K562 (cell line): ENCODE measurements at regions of chr1 and their contacts with region 1.

Region 1: DNA sequence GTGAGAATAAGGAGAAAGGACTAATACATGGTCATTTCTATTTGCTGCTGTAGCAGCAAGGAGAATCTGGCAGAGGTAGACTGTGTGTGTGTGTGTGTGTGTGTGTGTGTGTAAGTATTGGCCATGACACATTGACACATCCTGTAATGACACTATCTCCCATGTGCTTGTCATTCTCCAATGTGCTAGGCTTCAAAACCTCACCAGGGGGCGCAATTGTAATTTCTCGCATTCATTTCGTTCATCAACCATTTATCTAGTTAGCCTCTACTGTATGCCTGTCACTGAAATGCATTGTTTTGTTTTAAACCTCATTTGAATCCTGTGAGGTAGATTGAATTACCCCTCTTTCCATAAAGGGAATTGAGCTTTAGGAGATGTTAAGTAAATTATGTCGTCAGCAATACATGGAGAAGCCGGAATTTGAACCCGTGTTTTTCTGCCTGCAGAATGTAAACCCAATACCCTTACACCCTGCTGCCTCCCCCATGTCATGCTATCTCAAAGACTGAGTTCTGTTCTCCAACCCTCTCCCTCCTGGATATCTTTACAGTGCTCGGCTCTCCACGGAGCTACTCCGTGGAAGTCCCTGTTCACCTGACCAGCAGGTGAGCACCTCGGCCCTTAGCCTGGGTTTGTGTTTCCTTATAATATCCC is 100.8 kb downstream of the UCK2 start:
- DNase-seq: peak; percentile 70 to 78 (median 77)
- ATAC-seq: peak; percentile 69
- H3K4me3 ChIP-seq: no peak overlapping the region
- H3K27ac ChIP-seq: no peak overlapping the region
- H3K4me1 ChIP-seq: peaks cover 5 to 7% of the 10 kb centered on the region in 2 experiments; a peak in 3 of 5 replicates
- H3K27me3 ChIP-seq: no peaks in the 10 kb centered on the region
- CTCF ChIP-seq: peak; percentile 76 to 84 (median 84)
- EP300 ChIP-seq: no peak
- POLR2A ChIP-seq: no peak
- RAD21 ChIP-seq: peak; percentile 72 to 90

Region 2: DNA sequence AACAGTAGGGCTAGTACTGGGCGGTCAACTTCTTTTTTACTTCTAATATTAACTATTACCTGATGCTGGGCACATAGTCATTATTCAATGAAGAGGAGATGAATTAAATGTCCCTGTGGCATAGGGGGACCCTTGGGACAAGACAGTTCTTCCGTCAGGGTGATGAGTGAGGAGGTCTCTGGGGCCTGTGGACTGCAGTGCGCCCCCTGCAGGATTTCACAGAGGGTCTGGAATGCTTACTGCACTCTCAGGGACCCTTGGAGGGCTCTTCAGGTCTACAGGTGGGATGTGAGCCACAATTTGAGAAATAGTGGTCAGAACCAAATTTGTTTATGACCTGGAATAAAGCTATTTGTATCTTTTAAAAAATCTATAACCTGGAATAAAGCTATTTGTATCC is 89.2 kb after region 1 on chr1:
- CTCF ChIA-PET with region 1: no interaction called
- POLR2A ChIA-PET with region 1: no interaction called
- in situ Hi-C with region 1: no loop called
- intact Hi-C with region 1: loop called (anchors 2 kb)
- DNase-seq: peak in 2 of 4 experiments; percentile 51 to 56
- ATAC-seq: peak; percentile 95
- H3K4me3 ChIP-seq: no peak overlapping the region
- H3K27ac ChIP-seq: no peak overlapping the region
- H3K4me1 ChIP-seq: no peaks in the 10 kb centered on the region
- H3K27me3 ChIP-seq: peaks cover 0 to 3% of the 10 kb centered on the region in 2 experiments; a peak in 2 of 5 replicates
- CTCF ChIP-seq: peak; percentile 52 to 71 (median 57)
- EP300 ChIP-seq: no peak
- POLR2A ChIP-seq: no peak
- RAD21 ChIP-seq: 0 out of 4 replicates have a peak, but pooled peaks of 1 of the 2 experiments have one; percentile 22

Region 3: DNA sequence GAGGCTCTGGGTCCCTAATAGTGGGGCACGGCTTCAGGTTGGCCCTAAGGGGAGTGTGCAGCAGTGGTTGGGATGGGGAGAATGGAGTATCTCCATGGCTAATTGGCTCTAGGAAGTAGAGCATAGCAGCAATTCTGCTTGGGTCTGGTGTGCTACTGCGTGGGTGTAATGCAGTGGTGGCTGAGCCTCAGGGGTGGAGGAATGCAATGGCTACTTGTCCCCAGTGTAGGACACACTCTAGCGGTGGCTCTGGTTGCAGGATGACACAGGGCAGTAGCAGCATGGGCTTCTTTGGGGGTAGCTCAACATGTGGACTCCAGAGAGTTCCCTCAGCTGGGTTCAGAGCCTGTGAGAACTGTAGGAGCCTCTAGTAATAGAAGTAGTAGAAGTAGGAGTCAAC is 329.8 kb after region 1 on chr1:
- CTCF ChIA-PET with region 1: no interaction called
- POLR2A ChIA-PET with region 1: no interaction called
- in situ Hi-C with region 1: no loop called
- intact Hi-C with region 1: loop called (anchors 5 kb)
- DNase-seq: peak in 1 of 4 experiments; percentile 36
- ATAC-seq: peak; percentile 93
- H3K4me3 ChIP-seq: no peak overlapping the region
- H3K27ac ChIP-seq: no peak overlapping the region
- H3K4me1 ChIP-seq: no peaks in the 10 kb centered on the region
- H3K27me3 ChIP-seq: no peaks in the 10 kb centered on the region
- CTCF ChIP-seq: peak; percentile 33 to 44 (median 38); a peak in 3 of 6 replicates
- EP300 ChIP-seq: no peak
- POLR2A ChIP-seq: no peak
- RAD21 ChIP-seq: peak in 1 of 2 experiments; percentile 30; a peak in 1 of 4 replicates

Region 4: GRCh38 chr1:166479052-166479631 is 550.9 kb after region 1 on chr1:
- CTCF ChIA-PET with region 1: interaction called, 4 read pairs
- POLR2A ChIA-PET with region 1: no interaction called
- in situ Hi-C with region 1: no loop called
- intact Hi-C with region 1: loop called (anchors 5 kb)
- DNase-seq: peak; percentile 54 to 80 (median 64)
- ATAC-seq: peak; percentile 81
- H3K4me3 ChIP-seq: no peak overlapping the region
- H3K27ac ChIP-seq: no peak overlapping the region
- H3K4me1 ChIP-seq: peaks cover 0 to 7% of the 10 kb centered on the region in 2 experiments; a peak in 4 of 5 replicates
- H3K27me3 ChIP-seq: no peaks in the 10 kb centered on the region
- CTCF ChIP-seq: peak; percentile 68 to 78 (median 75)
- EP300 ChIP-seq: no peak
- POLR2A ChIP-seq: no peak
- RAD21 ChIP-seq: peak; percentile 65 to 78

Region 5: GRCh38 chr1:167059045-167059808 is 1131.0 kb after region 1 on chr1:
- CTCF ChIA-PET with region 1: interaction called, 9 read pairs
- POLR2A ChIA-PET with region 1: no interaction called
- in situ Hi-C with region 1: no loop called
- intact Hi-C with region 1: loop called (anchors 2 kb)
- DNase-seq: peak; percentile 74 to 85 (median 76)
- ATAC-seq: peak; percentile 75
- H3K4me3 ChIP-seq: no peak overlapping the region
- H3K27ac ChIP-seq: peak overlapping the region; percentile 20; the same call in 1 of the 3 replicates
- H3K4me1 ChIP-seq: peaks cover 0 to 10% of the 10 kb centered on the region in 2 experiments; a peak in 3 of 5 replicates
- H3K27me3 ChIP-seq: peaks cover 9 to 32% of the 10 kb centered on the region in 2 experiments; a peak in 4 of 5 replicates
- CTCF ChIP-seq: peak; percentile 89 to 98 (median 96)
- EP300 ChIP-seq: no peak
- POLR2A ChIP-seq: no peak
- RAD21 ChIP-seq: peak; percentile 87 to 95